K562 (cell line): ENCODE measurements at regions of chr18 and their contacts with region 1.

Region 1: GRCh38 chr18:70288851-70289328 is at the start of gene SOCS6:
- DNase-seq: peak in 3 of 4 experiments; percentile 54 to 58 (median 55)
- ATAC-seq: peak; percentile 73
- H3K4me3 ChIP-seq: peak within 1 kb of the TSS; percentile 58
- H3K27ac ChIP-seq: peak within 1 kb of the TSS; percentile 70
- H3K4me1 ChIP-seq: peaks cover 15 to 22% of the 10 kb centered on the region in 2 experiments; a peak in 4 of 5 replicates
- H3K27me3 ChIP-seq: no peaks in the 10 kb centered on the region
- CTCF ChIP-seq: no peak
- EP300 ChIP-seq: no peak
- POLR2A ChIP-seq: peak; percentile 37; the same call in 1 of the 2 replicates
- RAD21 ChIP-seq: no peak
- polyA plus RNA-seq, gene SOCS6: 2.5 to 3.4 TPM

Region 2: DNA sequence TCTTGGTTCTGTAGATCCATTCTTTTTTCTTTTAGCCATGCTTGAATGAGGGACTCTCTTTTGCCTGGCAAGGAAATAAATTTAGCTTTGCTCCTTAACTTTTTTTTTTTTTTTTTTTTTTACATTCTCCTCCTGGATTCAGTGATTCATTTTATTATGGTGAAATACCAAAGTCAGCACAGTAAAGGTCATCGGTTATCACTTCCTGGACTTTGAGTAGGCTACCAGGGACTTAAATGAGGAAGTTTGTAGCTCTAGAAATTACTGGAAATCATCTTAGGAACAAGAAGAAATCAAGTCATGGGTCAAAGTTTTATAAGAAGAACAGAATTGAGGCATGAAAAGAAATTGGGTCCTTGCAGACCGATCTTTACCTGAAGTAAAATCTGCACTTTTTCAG is 75.0 kb after region 1 on chr18:
- CTCF ChIA-PET with region 1: no interaction called
- POLR2A ChIA-PET with region 1: no interaction called
- in situ Hi-C with region 1: no loop called
- intact Hi-C with region 1: loop called (anchors 10 kb)
- DNase-seq: no peak
- ATAC-seq: no peak
- H3K4me3 ChIP-seq: no peak overlapping the region
- H3K27ac ChIP-seq: no peak overlapping the region
- H3K4me1 ChIP-seq: no peaks in the 10 kb centered on the region; a peak in 2 of 5 replicates
- H3K27me3 ChIP-seq: no peaks in the 10 kb centered on the region
- CTCF ChIP-seq: no peak
- EP300 ChIP-seq: no peak
- POLR2A ChIP-seq: no peak
- RAD21 ChIP-seq: no peak